WTC11 (cell line): ENCODE measurements at regions of chr19 and their contacts with region 1.

Region 1: GRCh38 chr19:3479177-3479833 is 1.0 kb downstream of the SMIM24 start:
- DNase-seq: peak; percentile 79
- ATAC-seq: peak; percentile 47
- H3K4me3 Mint-ChIP-seq: no peak overlapping the region; the same call in 1 of the 2 replicates
- H3K27ac Mint-ChIP-seq: no peak overlapping the region
- H3K4me1 Mint-ChIP-seq: peaks cover 20% of the 10 kb centered on the region
- H3K27me3 Mint-ChIP-seq: peaks cover 6% of the 10 kb centered on the region
- CTCF ChIP-seq: no peak

Region 2: DNA sequence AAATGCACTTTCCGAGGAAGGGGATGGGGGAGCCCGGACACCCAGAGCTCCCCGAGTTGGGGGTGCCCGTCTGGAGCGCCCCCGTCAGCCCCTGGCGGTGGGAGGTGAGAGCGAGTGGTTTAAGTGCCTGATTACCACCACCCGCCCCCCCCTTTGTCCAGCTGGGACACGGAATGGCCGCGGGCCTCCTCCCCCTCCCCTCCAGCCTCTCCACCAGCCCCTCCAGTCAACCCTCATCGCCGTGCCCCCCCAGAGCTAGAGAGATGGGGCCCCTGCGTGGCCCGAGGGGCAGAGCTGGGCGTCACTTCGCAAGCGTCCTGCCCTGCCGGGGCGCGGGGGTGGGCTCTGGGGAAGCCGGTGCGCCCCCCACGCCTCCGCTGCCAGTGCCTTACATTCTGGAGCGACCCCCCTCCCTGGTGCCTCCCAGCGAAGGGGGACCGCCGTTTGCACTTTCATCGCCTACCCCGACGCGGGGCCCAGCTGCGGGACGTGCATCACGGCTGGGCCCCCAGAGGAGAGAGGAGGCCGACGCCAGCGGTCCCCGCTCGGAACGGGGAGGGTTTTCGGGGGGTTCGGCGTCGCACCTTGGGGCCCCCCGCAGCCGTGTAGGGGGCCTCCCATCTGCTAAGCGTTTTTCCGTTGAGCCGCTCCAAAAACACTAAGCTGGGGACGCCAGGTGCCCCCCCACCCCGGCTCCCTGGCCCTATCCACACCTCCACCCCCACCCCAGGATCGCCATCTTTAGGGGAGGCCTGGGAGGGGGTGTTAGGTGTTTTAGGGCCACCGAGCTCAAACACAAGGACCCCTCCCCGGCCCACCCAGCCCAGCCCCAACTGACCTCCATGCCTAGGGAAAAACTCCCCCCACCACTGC is 15.4 kb before region 1 on chr19:
- CTCF ChIA-PET with region 1: interaction called, 21 read pairs
- POLR2A ChIA-PET with region 1: interaction called, 4 read pairs
- DNase-seq: no peak
- ATAC-seq: peak; percentile 12
- H3K4me3 Mint-ChIP-seq: peak overlapping the region; percentile 49
- H3K27ac Mint-ChIP-seq: no peak overlapping the region
- H3K4me1 Mint-ChIP-seq: peaks cover 14% of the 10 kb centered on the region
- H3K27me3 Mint-ChIP-seq: peaks cover 77% of the 10 kb centered on the region
- CTCF ChIP-seq: no peak

Region 3: GRCh38 chr19:3550947-3551807 is 71.9 kb after region 1 on chr19:
- CTCF ChIA-PET with region 1: no interaction called
- POLR2A ChIA-PET with region 1: no interaction called
- DNase-seq: no peak
- ATAC-seq: no peak
- H3K4me3 Mint-ChIP-seq: no peak overlapping the region
- H3K27ac Mint-ChIP-seq: no peak overlapping the region
- H3K4me1 Mint-ChIP-seq: peaks cover 1% of the 10 kb centered on the region; the same call in 1 of the 2 replicates
- H3K27me3 Mint-ChIP-seq: no peaks in the 10 kb centered on the region; the same call in 1 of the 2 replicates
- CTCF ChIP-seq: no peak